Activated B cell treated with CpG ODN at 0.5 μM for 24 hours (primary cell): ENCODE measurements at regions of chr21 and their contacts with region 1.

Region 1: GRCh38 chr21:33360881-33361602 is 36.3 kb downstream of the IFNAR1 start:
- DNase-seq: peak; percentile 73
- ATAC-seq: peak; percentile 80
- H3K4me3 Mint-ChIP-seq: peak overlapping the region; percentile 78
- H3K27ac Mint-ChIP-seq: peak overlapping the region; percentile 93
- H3K4me1 Mint-ChIP-seq: peaks cover 41% of the 10 kb centered on the region
- H3K27me3 Mint-ChIP-seq: no peaks in the 10 kb centered on the region
- CTCF ChIP-seq: peak; percentile 87

Region 2: DNA sequence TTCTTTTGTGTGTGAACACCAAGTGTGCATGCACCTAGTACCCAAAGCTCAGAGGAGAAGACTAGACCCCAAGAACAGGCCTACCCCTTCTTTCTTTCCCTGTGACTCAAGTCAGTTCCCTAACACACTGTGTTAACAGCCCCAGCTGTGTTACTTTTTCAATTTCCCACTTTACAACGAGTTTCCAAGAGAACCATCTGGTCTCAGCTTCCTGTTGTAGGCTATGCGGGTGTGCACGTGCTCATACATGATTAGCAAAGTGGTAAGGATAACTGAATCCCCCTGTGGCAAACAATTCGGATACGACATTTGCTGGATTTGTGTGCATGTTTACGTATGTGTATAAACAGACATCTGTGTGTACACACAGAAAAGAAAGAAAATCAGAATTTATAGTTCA is 113.4 kb before region 1 on chr21:
- CTCF ChIA-PET with region 1: no interaction called
- POLR2A ChIA-PET with region 1: no interaction called
- intact Hi-C with region 1: no loop called
- DNase-seq: no peak
- ATAC-seq: no peak
- H3K4me3 Mint-ChIP-seq: no peak overlapping the region
- H3K27ac Mint-ChIP-seq: no peak overlapping the region
- H3K4me1 Mint-ChIP-seq: peaks cover 16% of the 10 kb centered on the region
- H3K27me3 Mint-ChIP-seq: no peaks in the 10 kb centered on the region
- CTCF ChIP-seq: no peak

Region 3: DNA sequence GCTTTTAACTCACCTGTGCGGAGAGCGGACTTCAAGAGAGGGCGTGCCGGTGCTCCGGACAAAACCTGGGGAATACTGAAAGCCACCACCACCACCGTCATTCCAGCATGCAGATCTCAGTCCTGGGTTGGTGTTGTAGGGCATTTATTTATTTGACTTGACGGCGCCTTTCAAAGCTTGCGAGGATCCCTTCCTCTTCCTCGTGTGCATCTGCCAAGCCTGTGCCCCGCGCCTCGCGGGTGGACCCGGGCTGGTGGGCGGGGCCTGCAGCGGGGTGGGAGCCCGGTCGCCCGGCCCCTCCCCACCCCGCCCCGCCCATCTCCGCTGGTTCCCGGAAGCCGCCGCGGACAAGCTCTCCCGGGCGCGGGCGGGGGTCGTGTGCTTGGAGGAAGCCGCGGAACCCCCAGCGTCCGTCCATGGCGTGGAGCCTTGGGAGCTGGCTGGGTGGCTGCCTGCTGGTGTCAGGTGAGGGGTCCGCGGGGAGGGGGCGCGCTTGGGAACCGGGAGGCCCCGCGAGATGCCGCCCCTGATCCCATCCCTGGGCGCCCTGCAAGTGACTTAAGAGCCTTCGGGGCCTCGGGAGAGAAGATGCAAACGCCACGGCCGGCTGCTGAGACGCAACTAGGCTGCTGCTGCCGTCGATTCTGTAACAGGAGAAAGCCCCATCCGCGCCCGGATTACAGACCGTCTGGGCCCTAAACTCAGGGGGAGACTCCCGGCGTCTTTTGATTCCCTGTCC is 94.8 kb before region 1 on chr21 and contains the start of gene IL10RB:
- CTCF ChIA-PET with region 1: interaction called, 21 read pairs
- POLR2A ChIA-PET with region 1: interaction called, 31 read pairs
- intact Hi-C with region 1: no loop called
- DNase-seq: peak; percentile 71
- ATAC-seq: peak; percentile 74
- H3K4me3 Mint-ChIP-seq: peak within 1 kb of the TSS; percentile 92
- H3K27ac Mint-ChIP-seq: peak within 1 kb of the TSS; percentile 95
- H3K4me1 Mint-ChIP-seq: peaks cover 66% of the 10 kb centered on the region
- H3K27me3 Mint-ChIP-seq: no peaks in the 10 kb centered on the region
- CTCF ChIP-seq: no peak
- total RNA-seq, gene IL10RB: 36.7 and 37.9 TPM in 2 replicates

Region 4: DNA sequence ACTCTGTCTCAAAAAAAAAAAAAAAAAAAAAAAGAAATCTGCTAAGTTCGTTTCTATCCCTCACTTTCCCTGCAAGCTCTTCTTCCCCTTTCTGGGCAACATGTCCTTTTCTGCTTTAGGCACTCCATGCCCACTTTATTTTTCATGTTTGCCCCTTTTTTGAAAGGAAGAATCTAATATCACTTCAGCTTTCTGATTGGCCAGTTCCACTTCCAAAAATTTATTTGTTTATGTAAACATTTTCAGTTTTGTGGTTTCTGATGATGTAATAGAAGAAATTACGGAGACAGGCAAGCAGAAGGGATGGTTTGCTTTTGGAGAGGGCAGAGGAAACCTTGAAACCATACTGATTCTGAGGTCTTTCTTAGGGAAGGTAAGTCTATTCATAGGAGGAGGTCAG is 21.1 kb before region 1 on chr21:
- CTCF ChIA-PET with region 1: interaction called, 18 read pairs
- POLR2A ChIA-PET with region 1: interaction called, 4 read pairs
- intact Hi-C with region 1: loop called (anchors 2 kb)
- DNase-seq: no peak
- ATAC-seq: no peak
- H3K4me3 Mint-ChIP-seq: peak overlapping the region; percentile 46
- H3K27ac Mint-ChIP-seq: peak overlapping the region; percentile 83
- H3K4me1 Mint-ChIP-seq: peaks cover 43% of the 10 kb centered on the region
- H3K27me3 Mint-ChIP-seq: no peaks in the 10 kb centered on the region
- CTCF ChIP-seq: no peak

Region 5: DNA sequence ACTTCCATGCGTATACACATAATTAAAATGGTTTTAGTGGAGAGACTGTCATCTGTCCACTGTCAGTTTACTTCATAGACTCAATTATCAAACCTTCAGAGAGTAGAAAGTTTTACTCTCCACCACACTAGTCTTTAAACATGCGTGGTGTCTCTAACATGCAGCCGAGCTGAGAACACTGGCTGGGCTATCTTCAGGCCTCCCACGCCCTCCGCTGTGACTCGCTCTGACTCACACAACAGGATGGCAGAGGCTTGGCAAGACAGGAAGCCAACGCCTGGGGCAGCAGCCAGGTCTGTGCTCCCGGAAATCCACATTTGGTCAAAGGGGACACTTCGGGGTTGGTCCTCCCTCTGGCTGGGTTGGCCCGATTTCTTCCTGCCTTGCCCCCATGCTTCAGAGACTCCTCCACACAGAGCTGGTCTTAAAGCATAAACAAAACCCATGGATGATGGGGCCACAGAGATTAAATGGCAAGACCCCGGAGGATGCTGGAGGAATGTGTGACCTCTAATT is 19.5 kb after region 1 on chr21:
- CTCF ChIA-PET with region 1: interaction called, 28 read pairs
- POLR2A ChIA-PET with region 1: interaction called, 102 read pairs
- intact Hi-C with region 1: loop called (anchors 1 kb)
- DNase-seq: peak; percentile 59
- ATAC-seq: peak; percentile 63
- H3K4me3 Mint-ChIP-seq: peak overlapping the region; percentile 59
- H3K27ac Mint-ChIP-seq: peak overlapping the region; percentile 97
- H3K4me1 Mint-ChIP-seq: peaks cover 84% of the 10 kb centered on the region
- H3K27me3 Mint-ChIP-seq: no peaks in the 10 kb centered on the region
- CTCF ChIP-seq: no peak

Region 6: GRCh38 chr21:33403779-33404585 is 42.9 kb after region 1 on chr21:
- CTCF ChIA-PET with region 1: interaction called, 38 read pairs
- POLR2A ChIA-PET with region 1: interaction called, 85 read pairs
- intact Hi-C with region 1: loop called (anchors 1 kb)
- DNase-seq: peak; percentile 39
- ATAC-seq: peak; percentile 43
- H3K4me3 Mint-ChIP-seq: peak overlapping the region; percentile 95
- H3K27ac Mint-ChIP-seq: peak overlapping the region; percentile 94
- H3K4me1 Mint-ChIP-seq: peaks cover 80% of the 10 kb centered on the region
- H3K27me3 Mint-ChIP-seq: no peaks in the 10 kb centered on the region
- CTCF ChIP-seq: no peak

Region 7: GRCh38 chr21:33441489-33442477 is 80.7 kb after region 1 on chr21:
- CTCF ChIA-PET with region 1: interaction called, 149 read pairs
- POLR2A ChIA-PET with region 1: interaction called, 98 read pairs
- intact Hi-C with region 1: loop called (anchors 1 kb)
- DNase-seq: peak; percentile 61
- ATAC-seq: peak; percentile 92
- H3K4me3 Mint-ChIP-seq: peak overlapping the region; percentile 58
- H3K27ac Mint-ChIP-seq: peak overlapping the region; percentile 92
- H3K4me1 Mint-ChIP-seq: peaks cover 73% of the 10 kb centered on the region
- H3K27me3 Mint-ChIP-seq: no peaks in the 10 kb centered on the region
- CTCF ChIP-seq: no peak